Left lung (tissue), 14 donors: ENCODE measurements at regions of chr1 and their contacts with region 1.

Region 1: GRCh38 chr1:211654838-211655787 is 20.3 kb downstream of the NEK2 start:
- DNase-seq: peak; percentile 82 to 95 (median 88)
- ATAC-seq: peak; percentile 99
- H3K4me3 ChIP-seq: no peak overlapping the region
- H3K27ac ChIP-seq: no peak overlapping the region
- H3K4me1 ChIP-seq: peaks cover 0 to 5% of the 10 kb centered on the region in 2 donors
- H3K27me3 ChIP-seq: no peaks in the 10 kb centered on the region
- CTCF ChIP-seq: peak; percentile 90 to 91

Region 2: GRCh38 chr1:211514030-211514754 is 140.9 kb before region 1 on chr1:
- intact Hi-C with region 1: loop called in 1 of 2 experiments (anchors 10 kb)
- DNase-seq: peak; percentile 57 to 87 (median 84)
- ATAC-seq: peak; percentile 91
- H3K4me3 ChIP-seq: no peak overlapping the region
- H3K27ac ChIP-seq: no peak overlapping the region
- H3K4me1 ChIP-seq: peaks cover 0 to 22% of the 10 kb centered on the region in 2 donors
- H3K27me3 ChIP-seq: peaks cover 0 to 30% of the 10 kb centered on the region in 2 donors
- CTCF ChIP-seq: peak; percentile 59 to 69

Region 3: DNA sequence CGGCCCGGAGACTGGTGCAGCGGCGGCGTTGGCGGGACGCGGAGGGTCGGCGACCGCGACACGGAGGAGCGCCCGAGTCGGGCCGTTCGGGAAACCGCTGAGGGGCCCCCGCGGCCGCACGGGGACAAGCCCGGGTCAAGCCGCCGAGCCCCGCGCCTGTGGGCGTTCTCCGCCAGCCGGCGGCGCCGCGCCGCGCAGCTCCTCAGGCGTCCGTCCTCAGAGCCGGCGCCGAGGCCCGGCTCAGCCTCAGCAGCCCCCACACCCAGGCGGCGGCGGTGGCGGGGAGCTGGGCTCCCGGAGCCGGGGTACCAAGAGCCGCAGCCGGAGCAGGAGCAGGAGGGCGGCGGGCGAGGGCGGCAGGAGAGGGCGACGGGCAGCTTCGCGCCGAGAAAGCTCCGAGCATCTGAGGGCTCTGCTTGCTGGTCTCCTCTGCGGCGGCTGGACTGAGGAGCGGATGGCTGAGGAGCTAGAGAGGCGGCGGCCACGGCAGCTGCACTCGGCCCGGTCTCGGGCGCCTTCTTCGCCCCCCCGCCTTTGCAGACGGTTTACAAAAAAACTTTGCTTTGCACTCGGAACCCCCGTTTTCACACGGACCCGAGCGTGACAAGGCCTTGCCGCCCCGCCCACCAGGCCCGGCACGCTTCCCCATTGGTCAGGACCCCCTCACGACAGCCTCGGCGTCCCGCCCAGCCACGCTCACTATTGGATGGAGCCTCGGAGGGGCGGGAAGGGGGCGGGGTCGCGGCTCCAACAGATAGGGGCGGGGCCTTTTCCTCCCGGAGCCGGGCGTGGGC is 76.3 kb before region 1 on chr1 and contains the start of gene SLC30A1:
- intact Hi-C with region 1: loop called (anchors 2 to 10 kb)
- DNase-seq: peak; percentile 97 to 100 (median 98)
- ATAC-seq: peak; percentile 94
- H3K4me3 ChIP-seq: peak within 1 kb of the TSS; percentile 81 to 85
- H3K27ac ChIP-seq: peak within 1 kb of the TSS; percentile 92 to 94
- H3K4me1 ChIP-seq: peaks cover 3 to 70% of the 10 kb centered on the region in 2 donors
- H3K27me3 ChIP-seq: no peaks in the 10 kb centered on the region
- CTCF ChIP-seq: no peak
- polyA plus RNA-seq, gene SLC30A1: 12.5 to 18.2 (median 15.1) TPM